ENCODE measurements at regions of chr14 and their contacts with region 1.

Region 1: GRCh38 chr14:24013654-24014514 is 25.2 kb downstream of the DHRS4L2 start:
- DNase-seq: peak; percentile 72
- H3K4me3 ChIP-seq: no peak overlapping the region
- H3K27ac ChIP-seq: no peak overlapping the region
- H3K4me1 ChIP-seq: peaks cover 0 to 4% (median 2%) of the 10 kb centered on the region in 4 donors
- H3K27me3 ChIP-seq: no peaks in the 10 kb centered on the region
- CTCF ChIP-seq: peak; percentile 88 to 94 (median 93)
- EP300 ChIP-seq: no peak
- POLR2A ChIP-seq: no peak

Region 2: DNA sequence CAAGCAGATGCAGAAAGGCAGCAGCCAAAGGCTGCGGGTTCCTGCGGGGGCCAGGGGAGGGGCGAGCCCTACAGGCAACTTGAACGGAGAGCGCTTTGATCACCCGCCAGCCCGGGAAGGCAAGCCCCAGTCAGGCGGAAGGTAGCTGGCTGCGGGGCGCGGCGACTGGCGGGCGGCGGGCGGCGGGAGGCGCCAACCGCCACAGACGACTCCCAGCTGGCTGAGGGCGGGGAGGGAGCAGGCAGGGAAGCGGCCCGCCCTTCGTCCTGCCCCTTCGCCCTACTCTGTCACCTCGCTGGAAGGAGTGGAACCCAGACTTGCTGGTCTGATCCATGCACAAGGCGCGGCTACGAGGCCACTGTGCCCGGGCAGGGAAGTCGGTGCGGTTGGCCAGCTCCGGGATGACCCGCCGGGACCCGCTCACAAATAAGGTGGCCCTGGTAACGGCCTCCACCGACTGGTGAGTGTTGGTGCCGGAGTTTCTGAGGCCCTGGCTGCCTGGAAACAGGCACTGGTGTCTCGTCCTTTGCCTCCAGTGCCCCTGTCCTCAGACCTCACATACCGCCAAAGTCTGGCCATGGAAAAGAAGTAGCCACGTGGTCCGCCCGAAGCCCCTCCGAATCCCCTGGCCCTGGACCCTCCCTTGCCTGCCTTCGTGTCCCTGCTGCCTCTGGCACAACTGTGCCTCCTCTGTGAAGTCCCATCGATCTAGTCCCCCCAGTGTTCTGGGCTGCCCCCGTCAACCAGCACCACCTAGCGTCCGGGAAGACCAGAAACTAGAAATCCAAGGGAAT is 22.5 kb after region 1 on chr14:
- intact Hi-C with region 1: loop called (anchors 1 kb)
- DNase-seq: peak; percentile 87
- H3K4me3 ChIP-seq: peak overlapping the region; percentile 42 to 59 (median 54)
- H3K27ac ChIP-seq: peak overlapping the region; percentile 84 to 93 (median 88)
- H3K4me1 ChIP-seq: peaks cover 0 to 6% (median 0%) of the 10 kb centered on the region in 4 donors
- H3K27me3 ChIP-seq: no peaks in the 10 kb centered on the region
- CTCF ChIP-seq: peak; percentile 57 to 74 (median 65)
- EP300 ChIP-seq: no peak
- POLR2A ChIP-seq: peak in 1 of 2 donors; percentile 34

Region 3: DNA sequence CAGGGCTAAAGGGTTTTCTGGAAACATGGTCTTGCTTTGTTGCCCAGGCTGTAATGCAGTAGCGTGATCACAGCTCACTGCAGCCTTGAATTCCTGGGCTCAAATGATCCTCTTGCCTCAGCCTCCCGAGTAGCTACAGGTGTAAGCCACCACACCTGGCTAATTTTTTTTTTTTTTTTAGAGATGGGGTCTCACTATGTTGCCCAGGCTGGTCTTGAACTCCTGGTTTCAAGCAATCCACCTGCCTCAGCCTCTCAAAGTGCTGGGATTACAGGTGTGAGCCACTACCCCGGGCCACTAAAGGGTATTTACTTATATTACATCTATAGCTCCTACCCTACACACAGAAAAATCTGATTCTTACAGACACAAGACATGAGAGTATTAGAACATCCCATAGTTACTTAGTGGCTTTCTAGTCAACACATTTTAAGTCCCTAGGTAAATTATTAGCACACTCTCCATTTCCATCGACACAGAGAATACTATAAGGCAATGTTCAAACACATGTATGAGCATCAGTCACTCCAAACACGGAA is 94.5 kb after region 1 on chr14:
- intact Hi-C with region 1: loop called (anchors 5 kb)
- DNase-seq: no peak
- H3K4me3 ChIP-seq: no peak overlapping the region
- H3K27ac ChIP-seq: peak overlapping the region in 1 of 4 donors; percentile 0
- H3K4me1 ChIP-seq: peaks cover 0 to 12% (median 2%) of the 10 kb centered on the region in 4 donors
- H3K27me3 ChIP-seq: no peaks in the 10 kb centered on the region
- CTCF ChIP-seq: no peak
- EP300 ChIP-seq: no peak
- POLR2A ChIP-seq: no peak

Region 4: DNA sequence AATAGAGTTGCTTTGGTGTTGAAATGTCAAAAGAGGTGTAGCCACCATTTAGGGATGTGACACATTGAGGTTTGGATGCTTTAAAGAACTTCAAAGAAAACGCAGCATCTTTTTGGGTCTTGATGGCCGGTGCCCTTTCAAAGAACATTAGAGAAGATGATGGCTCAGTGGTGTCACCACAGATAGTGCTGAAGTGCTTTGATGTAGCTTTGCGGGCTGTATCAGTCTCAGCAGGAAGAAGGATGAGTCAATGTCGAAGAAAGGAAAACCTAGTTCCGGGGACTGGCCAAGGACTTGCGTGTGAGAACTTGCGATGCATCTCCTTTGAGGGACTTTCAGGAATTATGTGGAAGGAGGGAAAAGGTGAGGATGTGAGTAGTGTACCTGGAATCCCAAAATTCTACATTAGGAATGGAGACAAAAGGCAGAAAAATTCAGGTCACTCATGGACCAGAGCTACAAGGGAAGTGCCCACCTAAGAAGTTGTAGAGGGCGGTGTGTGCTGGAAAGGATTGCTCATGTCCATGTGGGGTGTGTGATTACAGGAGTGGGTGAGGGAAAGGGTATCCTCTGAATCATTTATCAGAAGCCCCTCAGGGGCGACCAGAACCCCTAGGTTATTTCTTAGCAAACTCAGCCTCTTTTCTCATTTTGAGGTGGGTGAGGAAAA is 659.8 kb after region 1 on chr14:
- intact Hi-C with region 1: no loop called
- DNase-seq: no peak
- H3K4me3 ChIP-seq: no peak overlapping the region
- H3K27ac ChIP-seq: no peak overlapping the region
- H3K4me1 ChIP-seq: no peaks in the 10 kb centered on the region
- H3K27me3 ChIP-seq: peaks cover 0 to 7% (median 0%) of the 10 kb centered on the region in 3 donors
- CTCF ChIP-seq: no peak
- EP300 ChIP-seq: no peak
- POLR2A ChIP-seq: no peak